ENCODE measurements at regions of chr10 and their contacts with region 1.

Region 1: GRCh38 chr10:14588084-14588937 is 186.4 kb downstream of the FAM107B start:
- DNase-seq: peak; percentile 44 to 81 (median 52)
- H3K4me3 ChIP-seq: peak overlapping the region in 1 of 2 donors; percentile 37
- H3K4me3 Mint-ChIP-seq: peak overlapping the region; percentile 76 to 90 (median 86)
- H3K27ac ChIP-seq: peak overlapping the region; percentile 86
- H3K27ac Mint-ChIP-seq: peak overlapping the region; percentile 96 to 100 (median 98)
- H3K4me1 ChIP-seq: peaks cover 95% of the 10 kb centered on the region
- H3K4me1 Mint-ChIP-seq: peaks cover 82 to 96% (median 87%) of the 10 kb centered on the region in 4 donors
- H3K27me3 ChIP-seq: no peaks in the 10 kb centered on the region
- H3K27me3 Mint-ChIP-seq: no peaks in the 10 kb centered on the region

Region 2: DNA sequence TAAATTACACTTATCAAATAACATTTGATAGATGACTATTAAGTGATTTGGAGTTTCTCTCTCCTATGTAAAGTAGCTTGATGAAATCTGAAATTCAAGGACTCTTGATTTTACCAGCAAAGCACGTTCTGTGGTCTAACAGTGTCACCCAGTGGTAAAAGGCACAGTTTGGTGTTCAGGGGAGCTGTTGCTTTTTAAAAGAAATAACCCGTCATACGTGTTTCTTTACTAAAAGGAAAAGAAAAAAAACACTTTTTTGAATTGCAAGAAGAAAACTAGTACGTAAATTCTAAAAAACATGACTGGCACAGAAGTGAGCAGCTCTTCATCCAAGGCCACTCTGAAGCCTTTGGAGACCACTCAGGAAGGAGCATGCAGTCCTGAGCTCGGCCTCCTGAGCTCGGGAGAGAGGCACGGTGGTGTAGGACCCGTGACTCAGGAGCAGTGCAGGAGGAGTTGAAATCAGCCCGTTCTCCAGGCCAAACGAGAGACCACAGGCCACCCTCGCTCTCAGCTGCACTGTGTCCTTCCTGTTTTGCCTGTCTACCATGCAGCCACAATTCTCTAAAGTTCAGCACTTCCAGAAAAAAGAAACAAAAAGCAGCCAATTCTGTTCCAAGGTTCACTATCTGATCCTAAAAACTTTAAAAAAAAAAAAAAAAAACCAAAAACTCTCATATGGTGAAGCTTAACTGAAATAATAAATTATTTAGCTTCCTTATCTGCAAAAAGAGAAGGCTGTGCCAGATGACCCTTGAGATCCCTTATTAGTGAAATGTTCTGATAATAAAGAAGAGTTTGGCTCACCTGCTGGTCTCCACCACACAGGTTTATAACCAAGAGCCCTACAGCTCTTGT is 45.0 kb before region 1 on chr10:
- CTCF ChIA-PET with region 1: interaction called, 15 read pairs
- POLR2A ChIA-PET with region 1: interaction called, 9 read pairs
- intact Hi-C with region 1: loop called (anchors 1 kb)
- DNase-seq: peak; percentile 55 to 79 (median 59)
- H3K4me3 ChIP-seq: no peak overlapping the region
- H3K4me3 Mint-ChIP-seq: peak overlapping the region; percentile 30 to 85 (median 70)
- H3K27ac ChIP-seq: peak overlapping the region; percentile 56
- H3K27ac Mint-ChIP-seq: peak overlapping the region; percentile 56 to 94 (median 85)
- H3K4me1 ChIP-seq: peaks cover 97% of the 10 kb centered on the region
- H3K4me1 Mint-ChIP-seq: peaks cover 73 to 96% (median 84%) of the 10 kb centered on the region in 4 donors
- H3K27me3 ChIP-seq: no peaks in the 10 kb centered on the region
- H3K27me3 Mint-ChIP-seq: no peaks in the 10 kb centered on the region

Region 3: DNA sequence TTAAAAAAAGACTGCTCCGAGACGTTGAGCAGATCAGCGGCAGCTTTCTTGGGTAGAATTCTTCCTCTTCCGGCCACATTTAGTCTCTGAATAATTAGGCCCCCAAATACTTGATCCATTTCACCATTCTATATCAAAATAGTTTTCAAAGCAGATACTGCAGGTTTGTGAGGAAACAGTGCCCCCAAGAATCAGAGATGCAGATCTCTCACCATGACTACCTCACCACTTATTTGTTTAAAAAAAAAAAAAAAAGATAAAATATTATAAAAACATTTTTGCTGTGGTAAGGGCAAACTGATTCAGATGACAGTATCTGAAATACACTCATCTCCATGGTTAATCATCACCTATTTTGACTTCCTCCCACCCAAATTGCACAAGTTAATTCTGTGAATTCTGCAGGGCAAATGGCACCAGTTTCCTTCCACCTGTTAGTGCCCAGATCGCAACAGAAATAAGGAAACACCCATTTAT is 24.0 kb before region 1 on chr10:
- CTCF ChIA-PET with region 1: interaction called, 26 read pairs
- POLR2A ChIA-PET with region 1: interaction called, 640 read pairs
- intact Hi-C with region 1: loop called (anchors 1 kb)
- DNase-seq: peak; percentile 69 to 82 (median 78)
- H3K4me3 ChIP-seq: peak overlapping the region in 1 of 2 donors; percentile 8
- H3K4me3 Mint-ChIP-seq: peak overlapping the region; percentile 71 to 91 (median 85)
- H3K27ac ChIP-seq: peak overlapping the region; percentile 79
- H3K27ac Mint-ChIP-seq: peak overlapping the region; percentile 90 to 97 (median 96)
- H3K4me1 ChIP-seq: peaks cover 96% of the 10 kb centered on the region
- H3K4me1 Mint-ChIP-seq: peaks cover 71 to 99% (median 85%) of the 10 kb centered on the region in 4 donors
- H3K27me3 ChIP-seq: no peaks in the 10 kb centered on the region
- H3K27me3 Mint-ChIP-seq: no peaks in the 10 kb centered on the region

Region 4: DNA sequence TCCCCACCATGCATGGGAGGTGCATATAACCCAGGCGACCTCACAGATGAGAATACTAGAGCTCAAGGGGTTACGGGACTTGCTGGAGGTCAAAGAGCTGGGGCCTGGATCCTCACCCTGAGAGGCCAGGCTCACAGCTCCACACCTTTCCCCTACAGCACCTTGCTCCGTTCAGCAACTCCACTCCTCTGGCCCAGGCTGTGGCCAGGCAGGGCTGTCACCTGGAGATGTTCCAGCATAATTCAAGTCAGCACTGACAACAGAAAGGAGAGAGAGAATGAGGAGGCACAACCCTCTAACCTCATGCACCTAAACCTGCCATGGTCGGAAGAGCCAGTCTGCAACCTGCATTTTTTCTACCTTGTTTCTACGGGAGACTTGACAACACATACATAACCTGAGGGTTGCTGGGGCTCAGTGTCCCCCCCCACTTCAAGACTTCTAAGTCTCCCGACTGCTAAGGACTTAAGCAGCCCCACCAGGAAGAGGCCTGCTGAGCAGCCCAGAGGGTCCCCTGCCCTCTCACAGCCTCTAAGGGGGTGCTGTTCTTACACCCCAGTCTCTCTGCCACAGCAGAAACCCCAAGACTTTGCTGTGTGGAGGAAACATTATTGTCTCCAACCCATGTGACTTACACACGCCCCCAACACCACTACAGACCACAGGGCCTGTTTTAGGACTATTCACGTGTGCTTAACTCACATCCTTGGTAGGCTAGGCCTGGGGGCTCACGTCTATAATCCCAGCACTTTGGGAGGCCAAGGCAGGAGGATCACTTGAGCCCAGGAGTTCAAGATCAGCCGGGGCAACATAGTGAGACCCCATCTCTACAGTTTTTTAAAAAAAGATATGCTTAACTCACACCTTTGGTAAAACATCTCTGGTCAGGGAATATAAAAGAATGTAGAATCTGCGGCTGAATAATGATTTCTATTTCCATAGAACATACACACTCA is 10.8 kb after region 1 on chr10:
- CTCF ChIA-PET with region 1: interaction called, 14 read pairs
- POLR2A ChIA-PET with region 1: interaction called, 37 read pairs
- intact Hi-C with region 1: loop called (anchors 1 kb)
- DNase-seq: peak in 1 of 5 donors; percentile 41
- H3K4me3 ChIP-seq: no peak overlapping the region
- H3K4me3 Mint-ChIP-seq: peak overlapping the region in 2 of 8 donors; percentile 35 to 62
- H3K27ac ChIP-seq: no peak overlapping the region
- H3K27ac Mint-ChIP-seq: peak overlapping the region; percentile 61 to 94 (median 89)
- H3K4me1 ChIP-seq: peaks cover 79% of the 10 kb centered on the region
- H3K4me1 Mint-ChIP-seq: peaks cover 63 to 92% (median 80%) of the 10 kb centered on the region in 4 donors
- H3K27me3 ChIP-seq: no peaks in the 10 kb centered on the region
- H3K27me3 Mint-ChIP-seq: no peaks in the 10 kb centered on the region

Region 5: DNA sequence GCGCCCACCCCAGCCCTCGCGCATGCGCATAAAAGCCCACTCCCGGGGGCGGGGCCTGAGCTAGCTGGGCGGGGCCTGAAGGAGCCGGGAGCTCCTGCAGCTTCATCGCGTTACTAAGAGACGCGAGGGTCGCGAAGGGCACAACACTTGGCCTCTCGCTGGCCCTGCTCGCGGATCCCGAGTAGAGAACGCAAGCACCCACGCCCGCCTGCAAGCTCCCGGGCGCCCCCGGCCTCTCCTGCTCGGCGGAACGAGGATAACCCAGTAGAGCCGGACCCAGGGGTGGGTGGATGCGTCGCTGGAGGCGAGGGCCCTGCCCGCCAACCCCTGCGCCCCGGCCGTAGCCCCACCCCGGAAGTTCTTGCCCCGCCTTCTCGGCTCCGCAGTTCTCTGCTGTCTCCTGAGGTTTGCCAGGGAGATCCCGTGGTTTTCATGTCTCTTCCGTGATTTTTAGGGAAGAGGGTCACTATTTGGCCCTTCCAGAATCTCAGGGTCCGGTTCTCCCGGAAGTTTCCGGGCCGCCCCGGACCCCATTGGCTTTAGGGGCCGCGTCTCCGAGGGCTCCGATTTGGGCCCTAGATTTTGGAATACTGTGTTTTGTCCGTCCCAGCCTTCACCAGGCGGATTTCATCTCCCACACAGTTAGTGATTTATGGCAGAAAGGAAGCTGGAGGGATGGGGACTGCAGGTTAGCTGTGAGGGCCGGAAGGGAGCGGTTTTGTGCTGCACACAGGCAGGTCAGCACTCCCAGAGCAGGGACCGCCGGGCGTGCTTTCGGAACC is 371.2 kb after region 1 on chr10 and contains the start of gene MEIG1:
- CTCF ChIA-PET with region 1: no interaction called
- POLR2A ChIA-PET with region 1: interaction called, 4 read pairs
- intact Hi-C with region 1: loop called (anchors 10 kb)
- DNase-seq: peak; percentile 87 to 92 (median 88)
- H3K4me3 ChIP-seq: peak within 1 kb of the TSS; percentile 79 to 98
- H3K4me3 Mint-ChIP-seq: peak within 1 kb of the TSS; percentile 93 to 99 (median 96)
- H3K27ac ChIP-seq: peak within 1 kb of the TSS; percentile 92
- H3K27ac Mint-ChIP-seq: peak within 1 kb of the TSS; percentile 93 to 99 (median 96)
- H3K4me1 ChIP-seq: peaks cover 14% of the 10 kb centered on the region
- H3K4me1 Mint-ChIP-seq: peaks cover 20 to 40% (median 29%) of the 10 kb centered on the region in 4 donors
- H3K27me3 ChIP-seq: no peaks in the 10 kb centered on the region
- H3K27me3 Mint-ChIP-seq: no peaks in the 10 kb centered on the region
- total RNA-seq, gene MEIG1: not detected

Region 6: GRCh38 chr10:15088428-15089261 is 500.3 kb after region 1 on chr10 and contains the start of gene ACBD7:
- CTCF ChIA-PET with region 1: no interaction called
- POLR2A ChIA-PET with region 1: no interaction called
- intact Hi-C with region 1: no loop called
- DNase-seq: peak; percentile 79 to 83 (median 80)
- H3K4me3 ChIP-seq: peak within 1 kb of the TSS; percentile 11 to 68
- H3K4me3 Mint-ChIP-seq: peak within 1 kb of the TSS; percentile 67 to 84 (median 78)
- H3K27ac ChIP-seq: no peak within 1 kb of the TSS
- H3K27ac Mint-ChIP-seq: peak within 1 kb of the TSS in 2 of 7 donors; percentile 23 to 40
- H3K4me1 ChIP-seq: peaks cover 4% of the 10 kb centered on the region
- H3K4me1 Mint-ChIP-seq: peaks cover 2 to 18% (median 7%) of the 10 kb centered on the region in 4 donors
- H3K27me3 ChIP-seq: no peaks in the 10 kb centered on the region
- H3K27me3 Mint-ChIP-seq: no peaks in the 10 kb centered on the region
- total RNA-seq, gene ACBD7: not detected

Measured in CD4-positive, alpha-beta memory T cell (primary cell).